ENCODE measurements at regions of chr16 and their contacts with region 1.

Region 1: DNA sequence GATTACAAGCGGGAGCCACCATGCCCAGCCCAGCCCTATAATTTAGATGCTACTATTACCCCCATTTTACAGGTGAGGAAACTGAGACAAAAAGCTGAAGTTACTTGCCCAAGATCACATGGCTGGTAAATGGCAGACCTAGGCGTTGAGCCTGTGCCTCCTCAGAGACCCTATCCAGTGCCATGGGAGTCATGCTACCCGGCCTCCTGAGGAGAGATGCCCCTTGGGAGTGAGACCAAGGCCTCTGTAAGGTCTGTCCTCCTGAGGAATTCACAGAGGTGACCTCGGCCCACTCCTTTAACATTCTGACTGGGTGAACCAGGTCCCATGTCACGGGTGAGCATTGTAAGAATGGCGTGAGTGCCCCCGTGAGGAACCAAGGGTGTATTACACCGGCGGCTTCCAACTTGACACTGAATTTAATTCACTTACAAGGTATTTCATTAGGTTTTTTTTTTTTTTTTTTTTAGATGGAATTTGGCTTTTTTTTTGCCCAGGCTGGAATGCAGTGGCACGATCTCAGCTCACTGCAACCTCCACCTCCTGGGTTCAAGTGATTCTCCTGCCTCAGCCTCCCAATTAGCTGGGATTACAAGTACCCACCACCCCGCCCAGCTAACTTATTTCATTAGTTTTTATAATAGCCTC is 95.7 kb downstream of the ABCC6 start:
- DNase-seq: peak; percentile 84
- H3K4me3 ChIP-seq: no peak overlapping the region
- H3K27ac ChIP-seq: peak overlapping the region; percentile 32
- H3K4me1 ChIP-seq: peaks cover 15% of the 10 kb centered on the region
- CTCF ChIP-seq: peak; percentile 93

Region 2: DNA sequence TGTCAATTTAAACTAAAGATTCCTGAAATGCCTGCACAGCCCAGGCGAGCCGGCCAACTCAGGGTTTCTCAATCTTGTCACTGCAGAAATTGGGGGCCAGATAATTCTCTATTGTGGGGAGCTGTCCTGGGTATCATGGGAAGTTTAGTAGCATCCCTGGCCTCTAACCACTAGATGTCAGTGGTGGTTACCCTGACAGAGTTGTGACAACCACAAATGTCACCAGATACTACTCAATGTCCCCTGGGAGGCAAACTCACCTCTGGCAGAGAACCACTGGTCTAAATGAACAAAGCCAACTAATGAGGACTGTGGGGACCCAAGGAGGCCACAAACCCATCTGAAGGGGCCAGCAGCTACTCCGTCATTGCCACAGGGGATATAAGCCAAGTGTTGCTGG is 361.7 kb before region 1 on chr16:
- CTCF ChIA-PET with region 1: no interaction called
- POLR2A ChIA-PET with region 1: interaction called, 3 read pairs
- intact Hi-C with region 1: loop called (anchors 1 kb)
- DNase-seq: peak; percentile 94
- H3K4me3 ChIP-seq: no peak overlapping the region
- H3K27ac ChIP-seq: no peak overlapping the region
- H3K4me1 ChIP-seq: peaks cover 10% of the 10 kb centered on the region
- CTCF ChIP-seq: peak; percentile 96

Region 3: GRCh38 chr16:15874745-15875314 is 252.8 kb before region 1 on chr16:
- CTCF ChIA-PET with region 1: no interaction called
- POLR2A ChIA-PET with region 1: no interaction called
- intact Hi-C with region 1: loop called (anchors 1 kb)
- DNase-seq: peak; percentile 42
- H3K4me3 ChIP-seq: no peak overlapping the region
- H3K27ac ChIP-seq: no peak overlapping the region
- H3K4me1 ChIP-seq: no peaks in the 10 kb centered on the region
- CTCF ChIP-seq: peak; percentile 87

Region 4: DNA sequence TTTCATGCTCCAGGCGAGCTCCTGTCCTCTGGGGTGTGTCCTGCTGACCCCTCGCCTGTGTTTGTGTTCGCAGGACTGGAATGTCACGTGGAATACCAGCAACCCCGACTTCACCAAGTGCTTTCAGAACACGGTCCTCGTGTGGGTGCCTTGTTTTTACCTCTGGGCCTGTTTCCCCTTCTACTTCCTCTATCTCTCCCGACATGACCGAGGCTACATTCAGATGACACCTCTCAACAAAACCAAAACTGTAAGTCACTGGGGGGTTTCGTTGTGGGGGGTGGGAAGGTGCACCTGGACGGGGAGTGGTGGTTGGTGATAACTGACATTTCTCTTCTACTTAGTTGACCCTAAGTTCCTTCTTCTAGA is 119.9 kb before region 1 on chr16:
- CTCF ChIA-PET with region 1: no interaction called
- POLR2A ChIA-PET with region 1: no interaction called
- intact Hi-C with region 1: loop called (anchors 1 kb)
- DNase-seq: peak; percentile 94
- H3K4me3 ChIP-seq: peak overlapping the region; percentile 53
- H3K27ac ChIP-seq: peak overlapping the region; percentile 98
- H3K4me1 ChIP-seq: peaks cover 50% of the 10 kb centered on the region
- CTCF ChIP-seq: no peak

Region 5: GRCh38 chr16:16096121-16096857 is 31.3 kb before region 1 on chr16:
- CTCF ChIA-PET with region 1: no interaction called
- POLR2A ChIA-PET with region 1: interaction called, 3 read pairs
- intact Hi-C with region 1: loop called (anchors 2 kb)
- DNase-seq: peak; percentile 82
- H3K4me3 ChIP-seq: peak overlapping the region; percentile 28
- H3K27ac ChIP-seq: peak overlapping the region; percentile 100
- H3K4me1 ChIP-seq: peaks cover 66% of the 10 kb centered on the region
- CTCF ChIP-seq: peak; percentile 78